ENCODE measurements at regions of chr19 and their contacts with region 1.

Region 1: DNA sequence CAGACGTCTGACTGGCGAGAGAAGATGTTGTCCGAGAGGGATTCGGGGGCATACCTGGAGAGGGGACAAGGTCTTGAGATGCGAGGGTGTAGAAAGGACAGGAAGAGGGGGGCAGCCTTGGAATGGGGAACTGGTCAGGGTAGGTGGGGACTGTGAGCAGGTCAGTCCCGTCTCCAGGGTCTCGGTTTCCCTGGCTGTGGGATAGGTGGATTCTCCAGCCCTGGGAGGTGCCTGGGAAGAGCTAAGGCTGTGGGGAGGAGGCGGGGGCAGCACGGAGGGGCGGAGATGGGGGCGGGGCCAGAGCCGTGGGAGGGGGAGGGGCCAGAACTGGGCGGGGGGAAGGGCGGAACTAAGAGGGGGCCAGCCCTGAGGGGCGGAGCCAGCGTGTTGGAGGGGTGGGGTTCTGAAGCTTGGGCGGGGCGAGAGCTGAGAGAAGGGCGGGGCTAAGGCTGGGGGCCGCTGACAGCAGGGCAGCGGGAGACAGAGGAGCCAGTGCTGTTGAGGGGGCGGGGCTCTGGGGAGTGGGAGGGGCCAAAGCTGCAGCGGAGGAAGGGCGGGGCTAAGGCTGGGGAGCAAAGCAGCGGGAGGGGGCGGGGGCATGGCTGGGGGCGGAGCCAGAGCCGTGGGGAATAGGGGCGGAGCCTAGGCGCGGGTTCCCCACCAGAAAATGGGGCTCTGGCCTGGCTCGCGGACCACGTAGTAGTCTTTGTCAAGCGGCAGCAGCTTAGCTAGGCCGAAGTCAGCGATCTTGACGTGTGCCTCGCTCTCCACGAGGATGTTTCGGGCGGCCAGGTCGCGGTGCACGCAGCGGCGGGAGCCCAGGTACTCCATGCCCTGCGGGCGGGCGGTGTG is 9.5 kb upstream of the INSL3 start:
- DNase-seq: peak; percentile 93 to 95
- H3K4me3 ChIP-seq: peak overlapping the region; percentile 66 to 93 (median 80)
- H3K27ac ChIP-seq: peak overlapping the region; percentile 82
- H3K4me1 ChIP-seq: peaks cover 0 to 15% (median 3%) of the 10 kb centered on the region in 4 experiments; a peak in 6 of 7 replicates
- H3K27me3 ChIP-seq: no peaks in the 10 kb centered on the region; a peak in 1 of 7 replicates
- CTCF ChIP-seq: no peak
- EP300 ChIP-seq: no peak
- POLR2A ChIP-seq: 0 out of 3 replicates have a peak, but pooled peaks of 1 of the 2 experiments have one; percentile 64
- RAD21 ChIP-seq: no peak

Region 2: DNA sequence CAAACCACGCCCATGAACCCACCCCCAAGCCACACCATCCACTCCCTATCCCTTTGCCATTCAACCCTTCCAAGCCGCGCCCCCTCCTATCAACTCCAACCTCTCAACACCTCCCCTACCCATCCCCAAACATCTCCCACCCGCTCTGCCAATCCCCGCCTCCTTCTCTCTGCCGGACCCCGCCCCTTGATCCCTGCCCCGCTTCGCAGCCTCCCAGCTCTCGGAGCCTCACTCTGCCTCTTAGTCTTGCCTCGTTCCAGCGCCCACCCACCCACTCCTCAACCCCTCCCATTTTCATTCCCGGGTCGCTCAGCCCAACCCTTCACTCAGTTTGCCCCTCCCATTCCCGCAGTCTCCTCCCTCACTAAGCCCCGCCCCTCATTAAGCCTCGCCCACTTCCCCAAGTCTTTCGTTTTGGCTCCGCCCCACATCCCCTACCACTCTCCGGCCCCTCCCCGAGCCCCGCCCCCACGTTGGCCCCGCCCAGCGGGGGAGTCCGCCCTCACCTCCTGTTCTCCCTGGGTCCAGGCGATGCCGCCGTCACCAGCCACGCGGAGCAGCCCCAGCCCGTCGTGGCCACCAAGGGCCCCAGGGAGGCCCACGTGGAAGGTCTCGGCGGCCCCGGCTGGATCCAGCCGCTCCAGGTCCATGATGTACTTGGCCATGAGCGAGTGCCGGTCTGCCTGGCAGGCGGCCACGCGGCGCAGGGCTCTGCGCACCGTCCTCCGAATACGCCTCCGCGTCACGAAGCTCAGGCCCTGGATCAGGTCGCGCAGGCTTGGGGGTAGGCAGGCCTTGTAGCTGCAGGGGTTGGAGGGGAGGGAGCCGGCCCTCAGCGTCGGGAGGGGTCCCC is 11.2 kb after region 1 on chr19:
- CTCF ChIA-PET with region 1: interaction called, 8 read pairs
- POLR2A ChIA-PET with region 1: interaction called, 29 read pairs
- DNase-seq: peak; percentile 97 to 99
- H3K4me3 ChIP-seq: peak overlapping the region; percentile 50 to 72 (median 62)
- H3K27ac ChIP-seq: no peak overlapping the region
- H3K4me1 ChIP-seq: peaks cover 0 to 11% (median 3%) of the 10 kb centered on the region in 4 experiments; a peak in 5 of 7 replicates
- H3K27me3 ChIP-seq: peaks cover 0 to 9% (median 2%) of the 10 kb centered on the region in 4 experiments; a peak in 3 of 7 replicates
- CTCF ChIP-seq: no peak
- EP300 ChIP-seq: no peak
- POLR2A ChIP-seq: no peak; a peak in 1 of 3 replicates
- RAD21 ChIP-seq: no peak